Activated naive CD8-positive, alpha-beta T cell treated with anti-CD3 and anti-CD28 coated beads, Interleukin-2, amount 10 ng/mL, durations not matched to agents 7 days and 5 days (primary cell): ENCODE measurements at regions of chr1 and their contacts with region 1.

Region 1: DNA sequence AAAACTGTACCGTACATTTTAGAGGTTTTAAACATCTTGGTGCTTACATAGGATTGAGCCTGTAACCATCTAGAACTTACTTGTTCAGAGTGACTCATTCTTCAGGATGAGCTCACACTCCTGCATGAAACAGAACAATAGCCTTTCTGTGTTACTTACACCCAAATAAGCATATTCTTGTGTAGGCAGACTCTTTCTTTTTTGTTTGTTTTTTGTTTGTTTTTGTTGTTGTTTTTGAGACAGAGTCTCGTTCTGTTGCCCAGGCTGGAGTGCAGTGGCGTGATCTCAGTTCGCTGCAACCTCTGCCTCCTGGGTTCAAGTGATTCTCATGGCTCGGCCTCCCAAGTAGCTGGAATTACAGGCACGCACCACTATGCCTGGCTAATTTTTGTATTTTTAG is 3.8 kb upstream of the CA6 start:
- DNase-seq: no peak
- ATAC-seq: no peak
- H3K4me3 Mint-ChIP-seq: peak overlapping the region; percentile 83
- H3K27ac Mint-ChIP-seq: peak overlapping the region; percentile 93
- H3K4me1 Mint-ChIP-seq: peaks cover 83% of the 10 kb centered on the region
- H3K27me3 Mint-ChIP-seq: no peaks in the 10 kb centered on the region

Region 2: DNA sequence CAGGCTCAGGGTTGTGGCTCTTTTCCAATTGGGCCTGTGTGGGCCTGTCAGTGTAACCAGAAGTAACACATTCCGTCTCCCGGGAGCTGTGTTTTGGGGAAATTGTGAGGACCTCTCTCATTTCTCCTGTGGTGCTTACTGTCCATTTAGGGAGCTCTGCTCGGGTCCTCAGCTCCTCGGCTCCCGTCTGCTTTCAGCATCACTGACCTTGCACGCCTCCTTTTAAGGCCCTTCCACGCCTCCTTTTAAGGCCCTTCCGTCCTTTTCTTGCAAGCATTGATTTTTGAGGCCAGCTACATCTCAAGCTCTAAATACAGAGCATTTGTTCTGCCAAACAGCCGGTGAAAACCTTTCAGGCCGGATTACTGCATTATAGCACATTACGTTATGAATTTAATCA is 13.5 kb after region 1 on chr1:
- POLR2A ChIA-PET with region 1: interaction called, 22 read pairs
- DNase-seq: no peak
- ATAC-seq: no peak
- H3K4me3 Mint-ChIP-seq: no peak overlapping the region
- H3K27ac Mint-ChIP-seq: no peak overlapping the region
- H3K4me1 Mint-ChIP-seq: peaks cover 43% of the 10 kb centered on the region
- H3K27me3 Mint-ChIP-seq: no peaks in the 10 kb centered on the region

Region 3: DNA sequence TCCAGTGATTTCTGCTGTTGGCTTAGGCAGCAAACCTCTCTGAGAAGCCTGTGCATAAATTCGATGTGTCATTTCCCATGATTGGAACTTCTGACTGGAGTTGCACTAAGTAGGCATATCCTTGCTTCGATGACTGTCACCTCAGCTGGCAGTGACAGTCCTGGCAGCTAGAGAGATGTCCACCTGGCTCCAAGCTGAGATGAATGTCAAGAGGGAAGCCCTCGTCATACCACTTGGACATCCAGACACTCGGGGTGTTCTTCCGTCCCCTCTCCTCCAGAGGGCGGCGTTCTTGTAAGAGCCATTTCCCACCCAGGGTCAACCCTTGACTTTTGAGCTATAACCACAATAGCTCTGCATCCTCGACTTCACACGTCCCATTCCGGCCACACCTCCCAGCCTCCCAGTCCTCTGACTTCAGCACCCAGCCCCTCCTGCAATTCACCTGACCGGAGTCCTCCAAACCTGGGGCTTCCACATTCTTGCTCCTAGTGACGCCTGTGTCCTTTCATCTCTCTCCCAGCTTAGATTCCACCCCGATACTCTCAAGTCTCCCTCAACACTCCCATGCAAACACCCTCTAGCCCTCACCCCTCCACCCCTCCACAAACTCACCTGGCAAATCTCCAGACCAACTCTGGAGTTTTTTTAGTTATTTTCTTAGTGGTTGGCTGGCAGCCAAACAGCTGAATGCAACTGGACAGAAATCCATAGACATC is 21.1 kb after region 1 on chr1:
- POLR2A ChIA-PET with region 1: interaction called, 541 read pairs
- DNase-seq: peak; percentile 71
- ATAC-seq: peak; percentile 53
- H3K4me3 Mint-ChIP-seq: peak overlapping the region; percentile 79
- H3K27ac Mint-ChIP-seq: peak overlapping the region; percentile 86
- H3K4me1 Mint-ChIP-seq: peaks cover 70% of the 10 kb centered on the region
- H3K27me3 Mint-ChIP-seq: no peaks in the 10 kb centered on the region